HepG2 (cell line): ENCODE measurements at regions of chr1 and their contacts with region 1.

Region 1: DNA sequence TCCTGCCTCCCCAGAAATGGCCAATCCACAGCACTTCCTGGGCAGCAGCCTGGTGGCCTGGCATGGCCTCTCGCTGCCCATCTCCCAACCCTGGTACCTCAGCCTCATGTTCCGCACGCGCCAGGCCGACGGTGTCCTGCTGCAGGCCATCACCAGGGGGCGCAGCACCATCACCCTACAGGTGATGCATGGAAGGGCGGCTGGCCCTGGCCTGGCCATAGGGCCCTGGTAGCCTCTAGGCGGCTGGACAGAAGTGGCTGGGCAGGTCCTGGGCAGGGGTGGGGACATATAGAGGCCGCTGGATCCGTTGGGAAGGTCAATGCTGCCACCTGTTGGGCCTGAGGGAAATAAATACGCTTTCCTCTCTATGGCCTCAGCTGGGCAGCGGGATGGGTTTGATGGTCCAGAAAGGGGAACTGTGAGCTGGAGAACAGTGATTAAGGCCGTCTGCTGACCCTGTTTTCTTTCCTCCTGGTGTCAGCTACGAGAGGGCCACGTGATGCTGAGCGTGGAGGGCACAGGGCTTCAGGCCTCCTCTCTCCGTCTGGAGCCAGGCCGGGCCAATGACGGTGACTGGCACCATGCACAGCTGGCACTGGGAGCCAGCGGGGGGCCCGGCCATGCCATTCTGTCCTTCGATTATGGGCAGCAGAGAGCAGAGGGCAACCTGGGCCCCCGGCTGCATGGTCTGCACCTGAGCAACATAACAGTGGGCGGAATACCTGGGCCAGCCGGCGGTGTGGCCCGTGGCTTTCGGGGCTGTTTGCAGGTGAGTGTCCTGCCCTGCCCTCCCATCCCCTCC is 14.5 kb downstream of the CELSR2 start:
- DNase-seq: peak; percentile 93
- ATAC-seq: peak; percentile 99
- H3K4me3 ChIP-seq: no peak overlapping the region
- H3K27ac ChIP-seq: no peak overlapping the region
- H3K4me1 ChIP-seq: no peaks in the 10 kb centered on the region
- H3K27me3 ChIP-seq: no peaks in the 10 kb centered on the region
- CTCF ChIP-seq: peak; percentile 99
- EP300 ChIP-seq: no peak
- POLR2A ChIP-seq: no peak
- RAD21 ChIP-seq: peak; percentile 99

Region 2: GRCh38 chr1:109201123-109201703 is 62.6 kb before region 1 on chr1:
- CTCF ChIA-PET with region 1: interaction called, 7 read pairs
- POLR2A ChIA-PET with region 1: no interaction called
- in situ Hi-C with region 1: loop called (anchors 5 kb)
- intact Hi-C with region 1: loop called (anchors 1 kb)
- DNase-seq: peak; percentile 49
- ATAC-seq: peak; percentile 65
- H3K4me3 ChIP-seq: no peak overlapping the region
- H3K27ac ChIP-seq: no peak overlapping the region
- H3K4me1 ChIP-seq: peaks cover 28% of the 10 kb centered on the region
- H3K27me3 ChIP-seq: no peaks in the 10 kb centered on the region
- CTCF ChIP-seq: peak; percentile 79
- EP300 ChIP-seq: no peak
- POLR2A ChIP-seq: no peak
- RAD21 ChIP-seq: 0 out of 2 replicates have a peak, but pooled peaks have one; percentile 23

Region 3: DNA sequence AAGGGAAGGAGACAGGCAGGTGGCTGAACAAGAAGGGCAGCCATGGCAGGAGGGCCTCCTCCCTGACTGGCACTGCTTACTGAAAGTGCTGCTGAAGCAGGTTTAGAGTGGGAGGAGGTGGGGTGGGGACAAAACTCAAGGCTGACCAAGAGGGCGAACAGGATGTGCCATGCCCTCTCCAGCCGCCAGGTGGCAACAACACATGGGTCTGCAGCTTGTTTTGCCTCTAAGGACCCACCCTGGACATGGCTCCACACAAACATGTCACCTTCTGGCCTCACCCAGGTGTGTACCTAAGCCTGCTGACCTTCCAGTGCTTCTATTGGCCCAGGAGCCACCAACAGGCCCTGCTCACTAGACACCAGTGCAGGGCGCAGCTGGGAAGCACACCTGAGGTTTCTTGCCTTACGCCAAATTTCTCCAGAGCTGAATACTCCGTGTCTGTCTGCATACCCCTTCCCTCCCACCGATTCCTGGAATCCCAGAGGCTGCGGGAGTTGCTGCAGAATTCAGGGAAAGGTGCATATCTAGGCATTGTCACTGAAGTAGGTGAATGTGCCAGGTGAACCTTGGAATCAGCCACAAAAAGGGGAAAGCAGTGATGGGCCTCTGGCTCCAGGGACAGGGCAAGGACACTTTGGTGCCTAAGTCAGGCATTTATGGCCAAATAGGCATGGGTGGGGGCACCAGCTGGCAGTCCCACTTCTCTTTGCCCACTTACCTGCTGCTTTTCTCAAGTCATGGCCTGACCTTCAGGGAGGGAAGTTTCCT is 13.8 kb after region 1 on chr1:
- CTCF ChIA-PET with region 1: interaction called, 12 read pairs
- POLR2A ChIA-PET with region 1: interaction called, 4 read pairs
- in situ Hi-C with region 1: no loop called
- intact Hi-C with region 1: loop called (anchors 1 kb)
- DNase-seq: peak; percentile 86
- ATAC-seq: peak; percentile 70
- H3K4me3 ChIP-seq: peak overlapping the region in 1 of 3 experiments; percentile 19; a peak in 1 of 6 replicates
- H3K27ac ChIP-seq: peak overlapping the region; percentile 66
- H3K4me1 ChIP-seq: peaks cover 88% of the 10 kb centered on the region
- H3K27me3 ChIP-seq: no peaks in the 10 kb centered on the region; a peak in 1 of 5 replicates
- CTCF ChIP-seq: peak; percentile 99
- EP300 ChIP-seq: peak in 1 of 2 experiments; percentile 30; a peak in 1 of 4 replicates
- POLR2A ChIP-seq: peak; percentile 20 to 66; a peak in 3 of 4 replicates
- RAD21 ChIP-seq: peak; percentile 93

Region 4: DNA sequence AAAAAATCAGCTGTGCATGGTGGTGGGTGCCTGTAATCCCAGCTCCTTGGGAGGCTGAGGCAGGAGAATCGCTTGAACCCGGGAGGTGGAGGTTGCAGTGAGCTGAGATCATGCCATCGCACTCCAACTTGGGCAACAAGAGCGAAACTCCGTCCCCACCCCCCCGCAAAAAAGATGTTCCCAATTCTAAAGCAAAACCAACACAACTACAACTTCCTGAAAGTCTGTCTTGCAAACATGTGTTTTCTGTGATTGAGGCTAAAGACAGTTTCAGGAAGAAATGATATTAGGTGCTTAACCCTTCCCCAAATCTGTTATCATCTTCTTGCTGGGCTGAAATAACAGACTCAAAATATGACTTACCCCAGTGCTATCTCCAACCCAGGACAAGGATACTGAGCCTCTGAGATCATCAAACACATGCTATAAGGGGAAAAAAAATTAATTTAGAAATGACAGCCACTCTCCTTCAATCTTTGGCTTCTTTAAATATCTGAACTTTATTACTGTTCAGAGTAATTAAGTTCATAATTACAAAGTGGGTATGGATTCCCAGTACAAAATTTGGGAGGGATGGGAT is 105.5 kb after region 1 on chr1:
- CTCF ChIA-PET with region 1: no interaction called
- POLR2A ChIA-PET with region 1: no interaction called
- in situ Hi-C with region 1: no loop called
- intact Hi-C with region 1: no loop called
- DNase-seq: no peak
- ATAC-seq: no peak
- H3K4me3 ChIP-seq: no peak overlapping the region
- H3K27ac ChIP-seq: no peak overlapping the region
- H3K4me1 ChIP-seq: peaks cover 65% of the 10 kb centered on the region
- H3K27me3 ChIP-seq: no peaks in the 10 kb centered on the region
- CTCF ChIP-seq: no peak
- EP300 ChIP-seq: no peak
- POLR2A ChIP-seq: no peak
- RAD21 ChIP-seq: no peak

Region 5: GRCh38 chr1:109404838-109405237 is 141.0 kb after region 1 on chr1:
- CTCF ChIA-PET with region 1: interaction called, 76 read pairs
- POLR2A ChIA-PET with region 1: no interaction called
- in situ Hi-C with region 1: loop called (anchors 5 kb)
- intact Hi-C with region 1: no loop called
- DNase-seq: no peak
- ATAC-seq: no peak
- H3K4me3 ChIP-seq: no peak overlapping the region
- H3K27ac ChIP-seq: no peak overlapping the region
- H3K4me1 ChIP-seq: no peaks in the 10 kb centered on the region
- H3K27me3 ChIP-seq: no peaks in the 10 kb centered on the region
- CTCF ChIP-seq: no peak
- EP300 ChIP-seq: no peak
- POLR2A ChIP-seq: no peak
- RAD21 ChIP-seq: no peak

Region 6: GRCh38 chr1:109457819-109458218 is 194.0 kb after region 1 on chr1:
- CTCF ChIA-PET with region 1: no interaction called
- POLR2A ChIA-PET with region 1: no interaction called
- in situ Hi-C with region 1: no loop called
- intact Hi-C with region 1: no loop called
- DNase-seq: peak; percentile 23
- ATAC-seq: no peak; the same call in 2 of the 3 replicates
- H3K4me3 ChIP-seq: no peak overlapping the region
- H3K27ac ChIP-seq: no peak overlapping the region
- H3K4me1 ChIP-seq: peaks cover 14% of the 10 kb centered on the region
- H3K27me3 ChIP-seq: peaks cover 0 to 6% of the 10 kb centered on the region in 2 experiments; a peak in 1 of 5 replicates
- CTCF ChIP-seq: no peak
- EP300 ChIP-seq: no peak
- POLR2A ChIP-seq: no peak
- RAD21 ChIP-seq: no peak